ENCODE measurements at regions of chr12 and their contacts with region 1.

Region 1: GRCh38 chr12:94101738-94102660 is 46.4 kb upstream of the PLXNC1 start:
- DNase-seq: peak; percentile 61 to 86 (median 82)
- ATAC-seq: peak; percentile 91
- H3K4me3 ChIP-seq: peak overlapping the region; percentile 77
- H3K4me3 Mint-ChIP-seq: peak overlapping the region; percentile 88 to 95 (median 90)
- H3K27ac ChIP-seq: peak overlapping the region; percentile 69
- H3K27ac Mint-ChIP-seq: peak overlapping the region; percentile 30 to 86 (median 76)
- H3K4me1 ChIP-seq: peaks cover 0 to 13% of the 10 kb centered on the region in 2 donors
- H3K4me1 Mint-ChIP-seq: peaks cover 11 to 30% (median 25%) of the 10 kb centered on the region in 7 donors
- H3K27me3 ChIP-seq: no peaks in the 10 kb centered on the region
- H3K27me3 Mint-ChIP-seq: peaks cover 0 to 19% (median 10%) of the 10 kb centered on the region in 5 donors

Region 2: GRCh38 chr12:92735131-92735721 is 1366.8 kb before region 1 on chr12:
- CTCF ChIA-PET with region 1: no interaction called
- POLR2A ChIA-PET with region 1: no interaction called
- intact Hi-C with region 1: no loop called
- DNase-seq: no peak
- ATAC-seq: no peak
- H3K4me3 ChIP-seq: no peak overlapping the region
- H3K4me3 Mint-ChIP-seq: no peak overlapping the region
- H3K27ac ChIP-seq: no peak overlapping the region
- H3K27ac Mint-ChIP-seq: peak overlapping the region in 2 of 9 donors; percentile 2 to 18
- H3K4me1 ChIP-seq: no peaks in the 10 kb centered on the region
- H3K4me1 Mint-ChIP-seq: peaks cover 0 to 29% (median 14%) of the 10 kb centered on the region in 7 donors
- H3K27me3 ChIP-seq: no peaks in the 10 kb centered on the region
- H3K27me3 Mint-ChIP-seq: peaks cover 0 to 9% (median 3%) of the 10 kb centered on the region in 5 donors

Region 3: GRCh38 chr12:92928962-92929915 is 1172.8 kb before region 1 on chr12 and contains the start of gene EEA1:
- CTCF ChIA-PET with region 1: no interaction called
- POLR2A ChIA-PET with region 1: no interaction called
- intact Hi-C with region 1: loop called in 1 of 2 experiments (anchors 1 kb)
- DNase-seq: peak; percentile 89 to 96 (median 91)
- ATAC-seq: peak; percentile 93
- H3K4me3 ChIP-seq: peak within 1 kb of the TSS; percentile 71
- H3K4me3 Mint-ChIP-seq: peak within 1 kb of the TSS; percentile 75 to 94 (median 91)
- H3K27ac ChIP-seq: peak within 1 kb of the TSS; percentile 96
- H3K27ac Mint-ChIP-seq: peak within 1 kb of the TSS; percentile 89 to 99 (median 93)
- H3K4me1 ChIP-seq: peaks cover 19 to 23% of the 10 kb centered on the region in 2 donors
- H3K4me1 Mint-ChIP-seq: peaks cover 20 to 53% (median 37%) of the 10 kb centered on the region in 7 donors
- H3K27me3 ChIP-seq: no peaks in the 10 kb centered on the region
- H3K27me3 Mint-ChIP-seq: peaks cover 0 to 6% (median 0%) of the 10 kb centered on the region in 5 donors
- total RNA-seq, gene EEA1: 20.9 to 28.3 (median 27.9) TPM

Region 4: DNA sequence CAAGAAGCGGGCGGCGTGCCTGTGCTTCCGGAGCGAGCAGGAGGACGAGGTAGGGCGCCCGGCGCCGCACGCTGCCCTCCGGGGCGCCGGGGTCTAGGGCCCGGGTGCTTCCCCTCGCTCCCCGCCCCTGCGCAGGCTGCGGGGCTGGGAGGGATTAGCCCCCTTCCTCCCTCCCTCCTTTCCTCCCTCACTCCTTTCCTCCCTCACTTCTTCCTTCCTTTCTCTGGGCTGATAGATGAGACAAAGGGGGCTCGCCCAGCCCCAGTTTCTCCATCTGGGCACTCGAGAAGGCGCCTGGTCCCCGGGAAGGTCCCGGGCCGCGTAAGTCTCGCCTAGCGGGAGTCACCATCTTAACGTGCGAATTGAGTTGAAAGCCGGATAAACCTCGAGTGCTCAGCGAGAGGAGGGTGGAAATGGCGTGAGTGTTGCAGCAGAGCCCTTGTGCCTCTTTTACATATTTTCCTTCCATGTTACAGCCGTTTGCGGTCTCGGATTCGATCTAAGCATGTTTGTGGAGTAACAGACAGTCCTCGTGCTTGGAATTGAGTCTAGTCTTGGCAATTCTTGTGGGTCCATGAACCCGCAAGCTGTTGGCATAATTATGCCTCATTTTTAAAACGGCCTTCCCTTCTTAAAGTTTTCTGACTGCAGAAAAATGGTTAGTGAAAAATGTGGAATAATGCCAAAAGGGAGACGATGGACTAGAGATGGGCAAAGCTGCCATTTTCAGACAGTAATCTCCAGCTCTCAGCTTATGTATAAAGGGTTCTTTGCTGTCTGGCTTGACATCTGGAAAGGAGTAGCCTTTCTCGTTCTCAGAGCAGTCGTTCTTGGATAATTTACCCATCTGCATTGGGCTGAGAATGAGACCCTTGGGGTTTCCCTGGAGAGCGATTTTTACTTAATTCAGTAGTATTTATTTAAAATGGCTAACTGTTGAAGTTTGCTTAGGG is 723.4 kb before region 1 on chr12:
- CTCF ChIA-PET with region 1: no interaction called
- POLR2A ChIA-PET with region 1: no interaction called
- intact Hi-C with region 1: loop called (anchors 5 kb)
- DNase-seq: peak; percentile 47 to 73 (median 69)
- ATAC-seq: peak; percentile 60
- H3K4me3 ChIP-seq: peak overlapping the region; percentile 76
- H3K4me3 Mint-ChIP-seq: peak overlapping the region; percentile 98 to 100 (median 99)
- H3K27ac ChIP-seq: peak overlapping the region; percentile 94
- H3K27ac Mint-ChIP-seq: peak overlapping the region; percentile 94 to 100 (median 99)
- H3K4me1 ChIP-seq: peaks cover 19 to 22% of the 10 kb centered on the region in 2 donors
- H3K4me1 Mint-ChIP-seq: peaks cover 34 to 62% (median 51%) of the 10 kb centered on the region in 7 donors
- H3K27me3 ChIP-seq: no peaks in the 10 kb centered on the region
- H3K27me3 Mint-ChIP-seq: no peaks in the 10 kb centered on the region

Region 5: GRCh38 chr12:93467351-93468007 is 634.5 kb before region 1 on chr12 and contains the start of gene MRPL42:
- CTCF ChIA-PET with region 1: interaction called, 5 read pairs
- POLR2A ChIA-PET with region 1: interaction called, 4 read pairs
- intact Hi-C with region 1: loop called (anchors 1 kb)
- DNase-seq: peak; percentile 86 to 96 (median 94)
- ATAC-seq: peak; percentile 97
- H3K4me3 ChIP-seq: peak within 1 kb of the TSS; percentile 94
- H3K4me3 Mint-ChIP-seq: peak within 1 kb of the TSS; percentile 85 to 96 (median 93)
- H3K27ac ChIP-seq: peak within 1 kb of the TSS; percentile 85
- H3K27ac Mint-ChIP-seq: peak within 1 kb of the TSS; percentile 90 to 98 (median 95)
- H3K4me1 ChIP-seq: peaks cover 8 to 10% of the 10 kb centered on the region in 2 donors
- H3K4me1 Mint-ChIP-seq: peaks cover 28 to 48% (median 36%) of the 10 kb centered on the region in 7 donors
- H3K27me3 ChIP-seq: no peaks in the 10 kb centered on the region
- H3K27me3 Mint-ChIP-seq: no peaks in the 10 kb centered on the region
- total RNA-seq, gene MRPL42: 30.1 to 65.8 (median 45.6) TPM

Region 6: GRCh38 chr12:93785262-93786010 is 316.6 kb before region 1 on chr12:
- CTCF ChIA-PET with region 1: interaction called, 3 read pairs
- POLR2A ChIA-PET with region 1: no interaction called
- intact Hi-C with region 1: loop called in 1 of 2 experiments (anchors 5 kb)
- DNase-seq: peak in 2 of 9 donors; percentile 29 to 48
- ATAC-seq: peak; percentile 77
- H3K4me3 ChIP-seq: no peak overlapping the region
- H3K4me3 Mint-ChIP-seq: peak overlapping the region in 4 of 10 donors; percentile 2 to 87 (median 36)
- H3K27ac ChIP-seq: no peak overlapping the region
- H3K27ac Mint-ChIP-seq: peak overlapping the region in 7 of 9 donors; percentile 35 to 81 (median 58)
- H3K4me1 ChIP-seq: peaks cover 9 to 26% of the 10 kb centered on the region in 2 donors
- H3K4me1 Mint-ChIP-seq: peaks cover 26 to 64% (median 61%) of the 10 kb centered on the region in 7 donors
- H3K27me3 ChIP-seq: no peaks in the 10 kb centered on the region
- H3K27me3 Mint-ChIP-seq: no peaks in the 10 kb centered on the region

Region 7: DNA sequence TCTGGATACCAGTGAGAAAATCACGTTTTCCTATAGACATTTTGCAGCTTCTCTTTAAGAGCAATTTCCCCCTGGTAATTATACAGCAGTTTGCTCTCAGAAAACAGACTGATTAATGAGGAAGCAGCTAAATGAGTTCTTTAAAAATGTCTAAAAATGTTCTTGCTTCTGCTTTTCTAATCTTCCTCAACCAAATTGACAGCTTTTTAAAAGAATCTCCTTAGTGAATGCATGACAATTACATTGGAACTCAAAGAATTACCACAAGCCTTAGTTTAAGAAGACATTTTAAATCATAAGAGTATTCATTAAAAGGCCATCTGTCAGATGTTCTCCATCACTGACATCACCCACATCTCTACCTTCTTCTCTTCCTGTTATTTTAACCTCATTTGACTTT is 89.4 kb before region 1 on chr12:
- CTCF ChIA-PET with region 1: interaction called, 6 read pairs
- POLR2A ChIA-PET with region 1: interaction called, 5 read pairs
- intact Hi-C with region 1: loop called in 1 of 2 experiments (anchors 1 kb)
- DNase-seq: no peak
- ATAC-seq: no peak
- H3K4me3 ChIP-seq: no peak overlapping the region
- H3K4me3 Mint-ChIP-seq: peak overlapping the region in 2 of 10 donors; percentile 2 to 5
- H3K27ac ChIP-seq: no peak overlapping the region
- H3K27ac Mint-ChIP-seq: peak overlapping the region in 6 of 9 donors; percentile 4 to 89 (median 40)
- H3K4me1 ChIP-seq: peaks cover 0 to 18% of the 10 kb centered on the region in 2 donors
- H3K4me1 Mint-ChIP-seq: peaks cover 12 to 64% (median 40%) of the 10 kb centered on the region in 7 donors
- H3K27me3 ChIP-seq: no peaks in the 10 kb centered on the region
- H3K27me3 Mint-ChIP-seq: no peaks in the 10 kb centered on the region

Measured in naive thymus-derived CD4-positive, alpha-beta T cell (primary cell).